Activated naive CD4-positive, alpha-beta T cell treated with anti-CD3 and anti-CD28 coated beads for 36 hours (primary cell): ENCODE measurements at regions of chr20 and their contacts with region 1.

Region 1: DNA sequence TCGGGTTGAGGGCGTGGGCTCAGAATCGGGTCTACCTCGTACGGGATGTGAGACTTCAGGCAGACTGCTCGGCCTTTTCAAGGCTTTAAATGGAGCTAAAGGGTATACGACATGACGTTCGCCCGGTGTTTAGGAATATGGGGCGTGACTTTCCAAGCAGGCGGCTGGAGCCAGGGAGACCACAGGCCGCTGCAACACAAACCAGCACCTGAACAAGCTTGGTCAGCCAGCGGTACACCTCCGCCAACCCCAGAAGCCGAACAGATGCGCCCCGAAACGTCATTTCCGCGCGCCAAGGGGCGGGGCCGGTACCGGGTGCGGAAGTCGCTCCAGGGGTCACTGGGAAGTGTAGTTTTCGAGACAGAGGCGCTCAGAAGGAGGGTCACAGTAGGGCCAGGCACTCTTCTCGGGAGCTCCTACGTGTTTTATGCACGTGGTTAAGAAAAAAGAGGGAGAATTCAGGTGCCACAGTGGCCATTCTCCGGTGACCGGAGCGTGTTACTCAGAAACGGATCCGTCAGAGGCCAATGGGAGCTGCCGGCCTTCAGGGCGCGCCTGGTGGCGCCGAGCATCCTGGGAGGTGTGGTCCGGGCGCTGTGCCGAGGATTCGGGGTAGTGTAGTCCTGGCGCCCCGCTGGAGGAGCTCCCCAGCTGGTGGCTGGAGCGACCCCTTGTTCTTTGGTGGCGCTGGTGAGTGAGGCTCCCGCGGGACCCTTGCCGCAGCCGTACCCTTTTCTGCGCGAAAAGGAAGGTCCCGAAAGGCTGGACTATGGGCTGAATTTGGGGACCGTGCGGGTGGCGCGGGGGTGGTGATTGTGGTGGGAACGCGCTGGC is at the start of gene ZNF133:
- DNase-seq: peak; percentile 97
- H3K4me3 Mint-ChIP-seq: peak within 1 kb of the TSS; percentile 95
- H3K27ac Mint-ChIP-seq: peak within 1 kb of the TSS; percentile 98
- H3K4me1 Mint-ChIP-seq: peaks cover 12% of the 10 kb centered on the region
- H3K27me3 Mint-ChIP-seq: peaks cover 12% of the 10 kb centered on the region
- total RNA-seq, gene ZNF133: 5.2 to 5.3 TPM

Region 2: GRCh38 chr20:16729565-16730456 is 1558.3 kb before region 1 on chr20 and contains the start of gene SNRPB2:
- CTCF ChIA-PET with region 1: no interaction called
- intact Hi-C with region 1: loop called (anchors 5 kb)
- DNase-seq: peak; percentile 95
- H3K4me3 Mint-ChIP-seq: peak within 1 kb of the TSS; percentile 99
- H3K27ac Mint-ChIP-seq: peak within 1 kb of the TSS; percentile 98
- H3K4me1 Mint-ChIP-seq: peaks cover 45% of the 10 kb centered on the region
- H3K27me3 Mint-ChIP-seq: peaks cover 6% of the 10 kb centered on the region
- total RNA-seq, gene SNRPB2: 93.1 to 99.8 TPM

Region 3: DNA sequence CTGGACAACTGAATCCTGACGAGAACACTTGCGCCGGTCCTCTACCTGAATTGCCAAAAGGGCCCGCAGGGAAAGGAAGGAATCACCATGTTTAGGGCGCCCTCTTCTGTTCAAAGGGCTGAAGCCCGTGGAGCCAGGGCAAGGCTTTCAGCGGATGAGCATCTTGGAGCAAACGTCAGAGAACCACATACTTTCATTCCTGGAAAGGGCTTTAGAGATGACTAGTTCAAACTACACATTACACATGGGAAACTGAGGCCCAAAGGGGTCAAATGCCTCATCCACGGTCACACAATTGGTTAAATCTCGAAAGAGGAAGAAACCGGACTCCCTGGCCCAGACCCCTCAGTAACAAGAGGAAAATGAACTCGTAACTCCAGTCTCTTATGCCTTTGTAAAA is 11.3 kb before region 1 on chr20:
- CTCF ChIA-PET with region 1: interaction called, 7 read pairs
- intact Hi-C with region 1: loop called (anchors 1 kb)
- DNase-seq: peak; percentile 80
- H3K4me3 Mint-ChIP-seq: no peak overlapping the region
- H3K27ac Mint-ChIP-seq: no peak overlapping the region
- H3K4me1 Mint-ChIP-seq: no peaks in the 10 kb centered on the region
- H3K27me3 Mint-ChIP-seq: peaks cover 37% of the 10 kb centered on the region

Region 4: DNA sequence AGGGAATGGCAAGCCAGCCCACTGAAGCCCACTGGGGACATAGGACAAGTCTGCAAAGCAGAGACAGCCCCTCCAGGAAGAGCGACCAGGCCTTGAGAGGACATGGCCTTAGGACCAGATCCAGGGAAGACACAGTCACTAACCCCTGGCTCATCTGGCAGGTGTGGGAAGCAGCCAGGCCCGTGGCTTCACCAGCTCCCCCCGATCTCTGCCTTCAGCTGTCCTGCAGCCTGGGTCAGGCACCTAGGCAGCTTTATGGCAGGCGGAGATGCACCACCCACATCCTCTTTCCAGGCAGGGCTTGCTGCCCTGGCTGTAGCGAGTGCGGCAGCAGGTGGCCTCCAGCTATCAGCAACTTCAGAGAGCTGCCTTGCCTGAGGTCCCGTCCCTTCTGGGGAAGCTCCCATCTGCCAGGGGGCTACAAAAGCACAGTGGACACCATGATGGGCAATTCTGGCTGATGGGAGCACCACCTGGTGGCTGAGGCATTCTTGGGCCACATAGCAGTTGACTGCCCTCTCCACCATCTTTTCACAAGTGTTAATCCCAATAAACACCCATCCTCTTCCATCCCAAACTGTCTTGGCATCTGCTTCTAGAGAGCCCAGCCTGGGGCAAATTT is 92.9 kb after region 1 on chr20:
- CTCF ChIA-PET with region 1: no interaction called
- intact Hi-C with region 1: no loop called
- DNase-seq: no peak
- H3K4me3 Mint-ChIP-seq: no peak overlapping the region
- H3K27ac Mint-ChIP-seq: no peak overlapping the region
- H3K4me1 Mint-ChIP-seq: no peaks in the 10 kb centered on the region
- H3K27me3 Mint-ChIP-seq: no peaks in the 10 kb centered on the region

Region 5: GRCh38 chr20:18496740-18497592 is 208.8 kb after region 1 on chr20 and contains the start of gene RBBP9:
- CTCF ChIA-PET with region 1: no interaction called
- intact Hi-C with region 1: loop called (anchors 1 kb)
- DNase-seq: peak; percentile 88
- H3K4me3 Mint-ChIP-seq: peak within 1 kb of the TSS; percentile 91
- H3K27ac Mint-ChIP-seq: peak within 1 kb of the TSS; percentile 84
- H3K4me1 Mint-ChIP-seq: peaks cover 11% of the 10 kb centered on the region
- H3K27me3 Mint-ChIP-seq: no peaks in the 10 kb centered on the region
- total RNA-seq, gene RBBP9: 17.3 to 18.1 TPM

Region 6: GRCh38 chr20:18566892-18567742 is 279.0 kb after region 1 on chr20 and contains the start of gene SMIM26:
- CTCF ChIA-PET with region 1: no interaction called
- intact Hi-C with region 1: loop called (anchors 1 kb)
- DNase-seq: peak; percentile 95
- H3K4me3 Mint-ChIP-seq: peak within 1 kb of the TSS; percentile 94
- H3K27ac Mint-ChIP-seq: peak within 1 kb of the TSS; percentile 95
- H3K4me1 Mint-ChIP-seq: peaks cover 19% of the 10 kb centered on the region
- H3K27me3 Mint-ChIP-seq: no peaks in the 10 kb centered on the region
- total RNA-seq, gene SMIM26: 57.3 to 60.0 TPM

Region 7: DNA sequence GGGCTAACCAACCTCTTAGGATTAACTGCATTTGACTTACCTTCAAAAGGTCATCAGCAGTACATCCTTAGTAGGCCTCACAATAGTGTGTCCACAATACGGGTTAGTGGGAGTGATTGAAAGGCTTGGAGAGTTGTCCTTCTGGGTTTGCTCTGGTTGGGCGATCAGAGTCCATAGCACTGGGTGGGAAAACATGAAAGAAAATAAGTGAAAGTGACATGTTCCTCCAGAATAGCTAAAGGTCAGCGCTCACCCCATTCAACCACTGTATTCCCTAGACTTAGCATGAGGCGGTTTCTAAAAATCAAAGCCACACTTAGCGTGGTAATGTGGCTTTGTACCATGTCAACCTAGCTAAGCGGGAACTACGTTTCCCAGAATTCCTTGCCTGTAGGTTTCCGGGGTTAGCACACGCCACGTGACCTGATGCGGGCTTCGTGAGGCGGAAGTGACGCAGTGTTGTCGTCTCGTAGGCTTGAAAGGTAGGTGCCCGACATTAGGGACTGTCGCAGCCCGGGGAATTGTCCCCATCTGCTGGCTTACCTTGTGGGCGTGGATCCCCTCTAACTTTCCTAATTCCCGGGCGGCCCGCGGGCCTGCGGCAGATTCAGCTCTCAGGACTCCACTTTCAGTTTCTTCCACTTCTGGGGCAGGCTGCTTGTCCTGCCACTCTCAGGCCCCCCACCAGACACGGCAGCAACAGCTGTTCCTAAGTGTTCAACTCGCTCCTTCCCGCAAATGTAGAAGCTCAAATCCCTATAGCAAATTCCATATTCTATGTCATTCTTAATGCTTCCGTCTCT is 505.7 kb after region 1 on chr20:
- CTCF ChIA-PET with region 1: no interaction called
- intact Hi-C with region 1: loop called (anchors 1 kb)
- DNase-seq: peak; percentile 93
- H3K4me3 Mint-ChIP-seq: peak overlapping the region; percentile 91
- H3K27ac Mint-ChIP-seq: peak overlapping the region; percentile 94
- H3K4me1 Mint-ChIP-seq: peaks cover 12% of the 10 kb centered on the region
- H3K27me3 Mint-ChIP-seq: peaks cover 8% of the 10 kb centered on the region